ENCODE measurements at regions of chr11 and their contacts with region 1.

Region 1: GRCh38 chr11:11022125-11022730 is 164.4 kb upstream of the ZBED5 start:
- DNase-seq: peak in 1 of 4 donors; percentile 23
- ATAC-seq: no peak
- H3K4me3 ChIP-seq: no peak overlapping the region
- H3K27ac ChIP-seq: no peak overlapping the region
- H3K4me1 ChIP-seq: no peaks in the 10 kb centered on the region
- H3K27me3 ChIP-seq: no peaks in the 10 kb centered on the region
- CTCF ChIP-seq: peak in 6 of 7 experiments; percentile 44 to 59 (median 53)
- POLR2A ChIP-seq: no peak

Region 2: GRCh38 chr11:10792398-10792975 is 229.7 kb before region 1 on chr11:
- intact Hi-C with region 1: loop called (anchors 5 kb)
- DNase-seq: peak; percentile 86 to 91 (median 88)
- ATAC-seq: peak; percentile 93
- H3K4me3 ChIP-seq: no peak overlapping the region
- H3K27ac ChIP-seq: no peak overlapping the region
- H3K4me1 ChIP-seq: peaks cover 8% of the 10 kb centered on the region
- H3K27me3 ChIP-seq: no peaks in the 10 kb centered on the region
- CTCF ChIP-seq: peak; percentile 82 to 95 (median 90)
- POLR2A ChIP-seq: no peak

Region 3: GRCh38 chr11:10937385-10937771 is 84.8 kb before region 1 on chr11:
- intact Hi-C with region 1: loop called (anchors 5 kb)
- DNase-seq: no peak
- ATAC-seq: no peak
- H3K4me3 ChIP-seq: no peak overlapping the region
- H3K27ac ChIP-seq: no peak overlapping the region
- H3K4me1 ChIP-seq: peaks cover 3% of the 10 kb centered on the region
- H3K27me3 ChIP-seq: no peaks in the 10 kb centered on the region
- CTCF ChIP-seq: no peak
- POLR2A ChIP-seq: no peak

Region 4: GRCh38 chr11:10955616-10956015 is 66.6 kb before region 1 on chr11:
- intact Hi-C with region 1: no loop called
- DNase-seq: no peak
- ATAC-seq: no peak
- H3K4me3 ChIP-seq: no peak overlapping the region
- H3K27ac ChIP-seq: no peak overlapping the region
- H3K4me1 ChIP-seq: no peaks in the 10 kb centered on the region
- H3K27me3 ChIP-seq: no peaks in the 10 kb centered on the region
- CTCF ChIP-seq: no peak
- POLR2A ChIP-seq: no peak

Measured in body of pancreas (tissue), 4 donors.